WTC11 (cell line): ENCODE measurements at regions of chr5 and their contacts with region 1.

Region 1: GRCh38 chr5:140639148-140639979 is at the start of gene TMCO6:
- DNase-seq: peak; percentile 96
- ATAC-seq: peak; percentile 97
- H3K4me3 Mint-ChIP-seq: peak within 1 kb of the TSS; percentile 88
- H3K27ac Mint-ChIP-seq: peak within 1 kb of the TSS; percentile 87
- H3K4me1 Mint-ChIP-seq: peaks cover 17% of the 10 kb centered on the region
- H3K27me3 Mint-ChIP-seq: peaks cover 2% of the 10 kb centered on the region; the same call in 1 of the 2 replicates
- CTCF ChIP-seq: no peak
- total RNA-seq, gene TMCO6: 28.7 to 32.6 TPM (median 32.2 TPM) in 3 replicates

Region 2: DNA sequence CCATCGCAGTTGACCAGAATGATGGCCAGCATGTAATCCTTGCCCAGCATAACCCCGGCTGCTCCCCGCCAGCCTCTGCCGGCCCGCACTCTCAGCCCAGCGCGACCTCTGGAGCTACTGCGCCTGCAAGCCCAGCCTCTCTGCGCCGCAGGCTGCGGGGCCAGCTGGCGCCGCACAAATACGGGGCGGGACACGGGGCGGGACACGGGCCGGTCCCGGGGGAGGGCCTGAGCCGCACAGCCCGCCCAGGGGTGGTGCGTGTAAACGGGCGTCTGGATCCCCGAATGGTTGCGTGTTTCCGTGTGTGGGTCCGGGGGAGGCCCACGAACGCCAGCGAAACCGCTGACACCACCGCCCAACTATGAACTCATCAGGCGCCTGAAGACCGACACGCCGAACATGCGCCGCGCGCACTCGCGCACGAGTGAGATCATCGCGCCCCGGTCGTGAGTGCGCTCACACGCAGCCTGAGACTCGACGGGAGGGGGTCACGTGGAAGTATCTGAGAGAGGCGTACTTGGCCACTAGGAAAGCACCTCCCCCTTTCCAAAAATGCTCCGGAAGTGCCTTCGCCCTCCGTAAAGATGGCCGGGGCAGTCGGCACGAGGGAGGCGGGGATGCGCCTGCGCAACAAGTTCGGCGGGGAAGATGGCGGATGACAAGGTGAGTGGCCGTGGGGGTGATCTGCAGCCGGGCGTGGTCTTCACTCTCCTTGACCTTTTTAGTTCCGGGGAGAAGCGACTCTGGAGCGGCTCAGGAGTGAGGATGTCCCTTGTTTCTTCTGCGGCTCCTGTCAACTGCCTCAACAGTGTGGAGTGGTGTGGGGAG is 75.0 kb before region 1 on chr5 and contains the starts of genes APBB3 and SLC35A4:
- CTCF ChIA-PET with region 1: interaction called, 12 read pairs
- POLR2A ChIA-PET with region 1: interaction called, 4 read pairs
- DNase-seq: peak; percentile 90
- ATAC-seq: peak; percentile 87
- H3K4me3 Mint-ChIP-seq: peak within 1 kb of the TSS; percentile 88
- H3K27ac Mint-ChIP-seq: peak within 1 kb of the TSS; percentile 73
- H3K4me1 Mint-ChIP-seq: peaks cover 19% of the 10 kb centered on the region
- H3K27me3 Mint-ChIP-seq: peaks cover 3% of the 10 kb centered on the region; the same call in 1 of the 2 replicates
- CTCF ChIP-seq: no peak
- total RNA-seq, gene APBB3: 23.7 to 25.9 TPM (median 25.2 TPM) in 3 replicates
- total RNA-seq, gene SLC35A4: 74.7 to 75.7 TPM (median 74.8 TPM) in 3 replicates

Region 3: GRCh38 chr5:140664030-140664358 is 24.6 kb after region 1 on chr5:
- CTCF ChIA-PET with region 1: no interaction called
- POLR2A ChIA-PET with region 1: no interaction called
- DNase-seq: no peak
- ATAC-seq: peak; percentile 5; the same call in 1 of the 2 replicates
- H3K4me3 Mint-ChIP-seq: peak overlapping the region; percentile 99
- H3K27ac Mint-ChIP-seq: peak overlapping the region; percentile 98
- H3K4me1 Mint-ChIP-seq: peaks cover 6% of the 10 kb centered on the region
- H3K27me3 Mint-ChIP-seq: no peaks in the 10 kb centered on the region
- CTCF ChIP-seq: no peak